ENCODE measurements at regions of chr1 and their contacts with region 1.

Region 1: DNA sequence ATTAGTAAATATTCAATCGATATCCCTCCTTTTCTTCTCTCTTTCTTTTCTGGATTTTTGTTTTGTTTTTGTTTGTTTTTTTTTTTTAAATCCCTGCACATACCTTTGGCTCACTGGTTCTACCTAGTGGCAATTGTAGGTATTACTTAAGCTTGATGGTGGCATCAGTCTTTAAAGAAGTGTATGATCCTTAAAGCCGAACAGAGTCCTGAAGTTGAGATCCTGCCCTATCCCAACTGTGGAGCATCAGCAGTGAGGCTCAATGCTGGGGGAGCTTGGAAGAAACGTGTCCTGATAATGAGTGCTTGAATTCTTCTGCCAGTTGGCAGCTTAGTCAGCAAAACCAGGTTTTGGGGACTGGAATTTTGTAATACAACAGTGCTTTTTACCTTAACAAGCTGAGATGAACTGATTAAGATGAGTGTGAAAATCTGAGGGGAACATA is 60.8 kb downstream of the FASLG start:
- DNase-seq: no peak
- H3K4me3 Mint-ChIP-seq: no peak overlapping the region
- H3K27ac Mint-ChIP-seq: no peak overlapping the region
- H3K4me1 Mint-ChIP-seq: peaks cover 24% of the 10 kb centered on the region
- H3K27me3 Mint-ChIP-seq: peaks cover 12% of the 10 kb centered on the region

Region 2: GRCh38 chr1:172449585-172450534 is 269.9 kb before region 1 on chr1:
- CTCF ChIA-PET with region 1: interaction called, 15 read pairs
- POLR2A ChIA-PET with region 1: interaction called, 3 read pairs
- DNase-seq: peak; percentile 48
- H3K4me3 Mint-ChIP-seq: no peak overlapping the region
- H3K27ac Mint-ChIP-seq: no peak overlapping the region
- H3K4me1 Mint-ChIP-seq: peaks cover 32% of the 10 kb centered on the region
- H3K27me3 Mint-ChIP-seq: peaks cover 1% of the 10 kb centered on the region

Region 3: DNA sequence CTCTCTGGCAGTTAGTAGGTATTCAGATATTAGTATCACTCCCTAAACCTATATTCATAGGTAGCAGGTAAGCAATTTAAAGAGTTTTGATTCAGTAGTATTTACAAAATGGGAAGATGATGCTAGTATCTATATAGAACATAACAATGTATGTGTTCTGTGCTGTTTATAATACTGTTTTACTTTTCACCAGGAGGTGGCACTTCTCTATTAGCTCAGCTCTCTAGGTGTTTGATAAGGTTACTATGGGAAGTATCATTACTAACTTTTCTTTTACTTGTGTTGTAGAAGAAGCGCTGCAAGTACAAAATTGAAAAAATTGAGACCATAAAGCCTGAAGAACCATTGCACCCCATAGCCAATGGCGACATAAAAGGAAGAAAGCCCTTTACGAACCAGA is 110.2 kb before region 1 on chr1:
- CTCF ChIA-PET with region 1: interaction called, 126 read pairs
- POLR2A ChIA-PET with region 1: interaction called, 6 read pairs
- DNase-seq: no peak
- H3K4me3 Mint-ChIP-seq: no peak overlapping the region
- H3K27ac Mint-ChIP-seq: no peak overlapping the region
- H3K4me1 Mint-ChIP-seq: no peaks in the 10 kb centered on the region
- H3K27me3 Mint-ChIP-seq: no peaks in the 10 kb centered on the region

Region 4: GRCh38 chr1:172662464-172663109 is 57.1 kb before region 1 on chr1:
- CTCF ChIA-PET with region 1: interaction called, 12 read pairs
- POLR2A ChIA-PET with region 1: interaction called, 4 read pairs
- DNase-seq: peak; percentile 91
- H3K4me3 Mint-ChIP-seq: peak overlapping the region; percentile 41
- H3K27ac Mint-ChIP-seq: peak overlapping the region; percentile 72
- H3K4me1 Mint-ChIP-seq: peaks cover 53% of the 10 kb centered on the region
- H3K27me3 Mint-ChIP-seq: peaks cover 5% of the 10 kb centered on the region

Region 5: DNA sequence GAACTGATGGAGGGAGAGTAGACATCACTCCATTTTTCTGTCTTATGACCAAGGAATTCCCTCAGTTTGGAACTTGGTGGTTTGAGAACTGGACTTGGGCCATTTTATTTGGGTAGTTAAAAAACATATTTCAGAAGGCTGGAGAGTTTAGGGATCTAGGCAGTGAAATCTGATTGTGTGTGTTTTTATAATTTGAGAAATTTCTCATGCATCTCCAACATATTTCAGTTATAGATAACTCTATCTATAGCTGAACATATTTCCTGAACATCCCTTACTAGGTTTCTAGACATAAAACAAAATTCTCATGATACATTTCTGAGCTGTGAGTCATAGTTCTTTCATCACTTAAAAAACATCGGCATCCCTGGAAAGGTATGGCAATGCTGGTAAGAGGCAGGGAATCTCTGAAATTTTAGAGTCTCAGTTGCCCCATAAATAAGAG is 41.9 kb after region 1 on chr1:
- CTCF ChIA-PET with region 1: no interaction called
- POLR2A ChIA-PET with region 1: no interaction called
- DNase-seq: no peak
- H3K4me3 Mint-ChIP-seq: no peak overlapping the region
- H3K27ac Mint-ChIP-seq: no peak overlapping the region
- H3K4me1 Mint-ChIP-seq: no peaks in the 10 kb centered on the region
- H3K27me3 Mint-ChIP-seq: peaks cover 46% of the 10 kb centered on the region

Region 6: DNA sequence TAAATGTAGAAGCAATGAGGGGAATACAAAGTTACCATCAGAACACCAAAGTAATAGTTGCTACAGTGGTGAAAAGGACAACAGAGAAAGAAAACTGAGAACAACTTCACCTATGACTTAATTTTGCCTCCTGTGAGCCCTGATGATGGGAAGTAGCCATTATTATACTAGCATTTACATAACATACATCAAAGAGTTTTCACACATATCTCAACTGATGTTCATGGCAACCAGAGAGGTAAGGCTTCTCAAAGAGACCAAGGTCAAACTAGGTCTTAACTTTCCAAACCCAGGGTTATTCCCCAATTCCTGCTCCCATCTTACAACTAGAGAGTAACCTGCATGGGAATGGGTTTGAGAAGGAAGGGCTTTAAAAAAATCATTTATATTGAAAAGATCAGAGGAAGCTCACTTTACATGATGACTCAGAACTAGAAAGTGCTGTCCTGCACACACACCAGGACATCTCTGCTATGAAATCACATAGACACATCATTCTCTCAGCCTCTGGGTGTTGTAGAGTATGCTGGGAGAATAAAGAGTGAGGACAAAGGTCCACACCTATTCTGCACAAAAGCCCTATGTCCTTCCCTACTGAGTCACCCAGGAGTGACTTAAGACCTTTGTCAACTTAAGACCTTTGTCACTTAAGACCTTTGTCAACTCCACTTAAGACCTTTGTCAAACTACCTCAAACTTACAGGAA is 151.3 kb after region 1 on chr1:
- CTCF ChIA-PET with region 1: no interaction called
- POLR2A ChIA-PET with region 1: no interaction called
- DNase-seq: no peak
- H3K4me3 Mint-ChIP-seq: no peak overlapping the region
- H3K27ac Mint-ChIP-seq: no peak overlapping the region
- H3K4me1 Mint-ChIP-seq: peaks cover 22% of the 10 kb centered on the region
- H3K27me3 Mint-ChIP-seq: peaks cover 36% of the 10 kb centered on the region